Mammary epithelial cell (primary cell): ENCODE measurements at regions of chr3 and their contacts with region 1.

Region 1: DNA sequence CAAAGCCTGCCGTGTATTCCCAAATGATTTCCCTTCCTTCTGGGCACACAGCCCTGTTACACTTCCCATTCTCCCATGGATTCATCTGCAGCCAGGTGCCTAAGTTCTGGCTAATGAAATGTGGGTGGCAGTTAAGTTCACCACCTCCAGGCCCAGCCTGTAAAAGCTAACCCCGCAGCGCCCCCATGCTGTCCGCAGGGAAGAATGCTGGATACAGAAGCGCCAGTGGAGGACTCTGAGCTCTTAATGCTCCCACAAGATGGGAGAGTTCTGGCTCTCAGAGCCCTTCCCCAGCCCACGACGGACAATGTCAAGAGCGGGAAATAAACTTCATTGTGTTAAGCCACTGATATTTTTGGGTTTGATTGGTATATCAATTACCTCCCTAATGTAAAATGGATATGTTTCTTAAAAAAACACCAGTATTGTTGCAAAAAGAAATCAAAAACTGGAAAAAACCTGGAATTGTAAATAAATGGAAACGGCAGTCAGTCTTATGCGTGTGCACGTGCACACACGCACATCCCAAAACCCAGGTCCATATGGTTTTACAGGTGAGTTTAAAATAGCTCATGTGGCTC is 37.7 kb upstream of the FGD5 start:
- DNase-seq: peak; percentile 39
- H3K4me3 ChIP-seq: no peak overlapping the region
- H3K27ac ChIP-seq: no peak overlapping the region
- H3K4me1 ChIP-seq: no peaks in the 10 kb centered on the region
- H3K27me3 ChIP-seq: no peaks in the 10 kb centered on the region
- CTCF ChIP-seq: peak; percentile 43 to 65

Region 2: GRCh38 chr3:14633819-14634424 is 147.1 kb before region 1 on chr3:
- CTCF ChIA-PET with region 1: no interaction called
- dilution Hi-C with region 1: no loop called
- in situ Hi-C with region 1: no loop called
- intact Hi-C with region 1: loop called (anchors 1 kb)
- DNase-seq: peak; percentile 41
- H3K4me3 ChIP-seq: no peak overlapping the region
- H3K27ac ChIP-seq: no peak overlapping the region
- H3K4me1 ChIP-seq: peaks cover 4% of the 10 kb centered on the region
- H3K27me3 ChIP-seq: no peaks in the 10 kb centered on the region
- CTCF ChIP-seq: peak; percentile 72 to 82

Region 3: DNA sequence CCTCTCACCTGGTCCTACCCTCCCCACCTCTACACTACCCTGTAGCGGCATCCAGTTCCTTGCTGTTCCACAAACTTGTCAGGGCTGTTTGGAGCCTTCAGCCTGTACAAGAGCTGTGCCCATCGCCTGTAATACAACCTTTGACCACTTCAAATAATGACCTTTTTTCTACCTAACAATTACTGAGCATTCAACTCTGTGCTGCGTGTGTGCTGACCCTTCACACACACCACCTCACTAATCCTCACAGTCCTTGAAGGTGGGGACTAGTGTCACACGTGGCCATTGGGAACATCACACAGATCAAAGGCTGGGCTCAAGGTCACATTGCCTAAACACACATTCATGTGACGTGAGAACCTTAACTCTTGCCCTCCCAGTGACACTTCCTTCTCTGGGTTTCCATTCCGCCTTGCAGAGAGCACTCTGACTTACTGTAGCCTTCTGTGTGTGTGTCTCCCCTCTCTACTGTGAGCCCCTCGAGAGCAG is 103.0 kb before region 1 on chr3:
- CTCF ChIA-PET with region 1: no interaction called
- dilution Hi-C with region 1: no loop called
- in situ Hi-C with region 1: no loop called
- intact Hi-C with region 1: loop called (anchors 1 kb)
- DNase-seq: no peak
- H3K4me3 ChIP-seq: no peak overlapping the region
- H3K27ac ChIP-seq: no peak overlapping the region
- H3K4me1 ChIP-seq: no peaks in the 10 kb centered on the region
- H3K27me3 ChIP-seq: no peaks in the 10 kb centered on the region
- CTCF ChIP-seq: no peak